PC-9 (cell line): ENCODE measurements at regions of chr9 and their contacts with region 1.

Region 1: DNA sequence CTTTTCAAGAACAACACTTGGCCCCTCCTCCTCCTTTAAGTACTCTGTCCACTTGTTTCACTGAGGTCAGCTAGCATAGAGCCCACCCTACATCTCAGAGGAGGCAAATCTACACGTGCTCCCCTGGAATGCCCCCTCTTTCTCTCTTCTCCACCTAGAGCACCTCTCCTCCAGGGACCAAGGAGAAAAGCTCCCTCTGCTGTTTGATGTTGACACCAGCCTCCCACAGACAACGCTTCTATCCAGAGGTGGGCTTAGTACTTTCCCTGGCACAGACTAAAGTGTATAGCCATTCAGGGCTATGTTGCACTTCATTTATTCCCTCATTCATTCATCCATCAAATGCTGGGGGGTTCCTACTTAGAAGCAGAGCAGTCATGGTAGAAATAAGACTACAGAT is 68.2 kb upstream of the TAF1L start:
- DNase-seq: no peak
- H3K4me3 ChIP-seq: no peak overlapping the region
- H3K27ac ChIP-seq: no peak overlapping the region
- H3K4me1 ChIP-seq: peaks cover 56% of the 10 kb centered on the region
- H3K27me3 ChIP-seq: no peaks in the 10 kb centered on the region
- CTCF ChIP-seq: peak; percentile 16; the same call in 1 of the 2 replicates

Region 2: GRCh38 chr9:32579706-32580331 is 123.8 kb before region 1 on chr9:
- CTCF ChIA-PET with region 1: interaction called, 3 read pairs
- POLR2A ChIA-PET with region 1: no interaction called
- intact Hi-C with region 1: loop called (anchors 10 kb)
- DNase-seq: peak; percentile 36 to 41
- H3K4me3 ChIP-seq: no peak overlapping the region
- H3K27ac ChIP-seq: no peak overlapping the region
- H3K4me1 ChIP-seq: no peaks in the 10 kb centered on the region
- H3K27me3 ChIP-seq: no peaks in the 10 kb centered on the region
- CTCF ChIP-seq: peak; percentile 88

Region 3: GRCh38 chr9:32644698-32645097 is 58.9 kb before region 1 on chr9:
- CTCF ChIA-PET with region 1: no interaction called
- POLR2A ChIA-PET with region 1: no interaction called
- intact Hi-C with region 1: loop called (anchors 1 kb)
- DNase-seq: peak; percentile 47 to 50
- H3K4me3 ChIP-seq: no peak overlapping the region
- H3K27ac ChIP-seq: no peak overlapping the region
- H3K4me1 ChIP-seq: peaks cover 4% of the 10 kb centered on the region; the same call in 1 of the 2 replicates
- H3K27me3 ChIP-seq: no peaks in the 10 kb centered on the region
- CTCF ChIP-seq: no peak

Region 4: GRCh38 chr9:32672461-32672860 is 31.2 kb before region 1 on chr9:
- CTCF ChIA-PET with region 1: no interaction called
- POLR2A ChIA-PET with region 1: no interaction called
- intact Hi-C with region 1: loop called (anchors 5 kb)
- DNase-seq: peak; percentile 30 to 81
- H3K4me3 ChIP-seq: no peak overlapping the region
- H3K27ac ChIP-seq: peak overlapping the region; percentile 66
- H3K4me1 ChIP-seq: peaks cover 15% of the 10 kb centered on the region
- H3K27me3 ChIP-seq: no peaks in the 10 kb centered on the region
- CTCF ChIP-seq: no peak

Region 5: GRCh38 chr9:32741706-32742105 is 38.1 kb after region 1 on chr9:
- CTCF ChIA-PET with region 1: no interaction called
- POLR2A ChIA-PET with region 1: interaction called, 9 read pairs
- intact Hi-C with region 1: loop called (anchors 5 kb)
- DNase-seq: peak; percentile 42 to 82
- H3K4me3 ChIP-seq: no peak overlapping the region; the same call in 1 of the 2 replicates
- H3K27ac ChIP-seq: peak overlapping the region; percentile 86
- H3K4me1 ChIP-seq: peaks cover 61% of the 10 kb centered on the region
- H3K27me3 ChIP-seq: no peaks in the 10 kb centered on the region
- CTCF ChIP-seq: no peak